Activated naive CD4-positive, alpha-beta T cell treated with anti-CD3 and anti-CD28 coated beads for 36 hours (primary cell): ENCODE measurements at regions of chr18 and their contacts with region 1.

Region 1: GRCh38 chr18:77061946-77062517 is 70.6 kb downstream of the MBP start:
- DNase-seq: peak; percentile 55
- H3K4me3 Mint-ChIP-seq: peak overlapping the region; percentile 11
- H3K27ac Mint-ChIP-seq: peak overlapping the region; percentile 98
- H3K4me1 Mint-ChIP-seq: peaks cover 78% of the 10 kb centered on the region
- H3K27me3 Mint-ChIP-seq: no peaks in the 10 kb centered on the region

Region 2: GRCh38 chr18:76859474-76860339 is 202.3 kb before region 1 on chr18:
- CTCF ChIA-PET with region 1: no interaction called
- intact Hi-C with region 1: loop called (anchors 1 kb)
- DNase-seq: peak; percentile 66
- H3K4me3 Mint-ChIP-seq: no peak overlapping the region
- H3K27ac Mint-ChIP-seq: peak overlapping the region; percentile 54
- H3K4me1 Mint-ChIP-seq: peaks cover 22% of the 10 kb centered on the region
- H3K27me3 Mint-ChIP-seq: no peaks in the 10 kb centered on the region

Region 3: DNA sequence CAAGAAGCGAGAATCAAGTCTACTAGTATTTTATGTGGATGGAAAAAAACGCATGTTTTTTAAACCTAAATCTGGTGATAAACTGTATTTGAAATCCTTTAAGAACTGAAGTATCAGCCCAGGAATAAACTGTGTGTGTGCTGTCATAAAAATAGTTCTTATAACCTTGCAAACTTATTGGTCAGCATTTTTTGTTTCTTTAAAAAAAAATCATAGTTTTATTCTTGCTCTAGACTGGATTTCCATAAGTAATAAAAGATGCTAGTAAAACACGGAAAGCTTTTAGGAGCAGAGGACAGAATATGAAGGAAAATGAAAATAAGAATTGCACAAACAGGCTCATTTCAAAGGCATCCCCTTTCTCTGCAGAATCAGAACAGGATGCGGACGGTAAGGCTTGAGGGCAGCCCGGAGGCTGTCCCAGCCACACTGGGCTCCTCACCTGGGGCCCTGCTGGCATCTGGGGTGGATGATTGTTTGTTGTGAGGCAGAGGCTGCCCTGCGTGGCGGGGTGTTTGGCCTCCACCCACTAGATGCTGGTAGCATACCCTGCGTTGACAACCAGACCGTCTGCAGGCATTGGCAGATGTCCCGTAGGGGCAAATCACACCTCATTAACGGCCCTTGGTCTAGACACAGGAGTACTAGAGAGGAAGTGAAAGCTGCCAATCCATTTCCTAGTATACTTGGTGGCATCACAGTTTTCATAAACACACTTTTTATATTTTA is 18.1 kb after region 1 on chr18:
- CTCF ChIA-PET with region 1: no interaction called
- intact Hi-C with region 1: no loop called
- DNase-seq: no peak
- H3K4me3 Mint-ChIP-seq: no peak overlapping the region
- H3K27ac Mint-ChIP-seq: no peak overlapping the region
- H3K4me1 Mint-ChIP-seq: peaks cover 57% of the 10 kb centered on the region
- H3K27me3 Mint-ChIP-seq: no peaks in the 10 kb centered on the region

Region 4: DNA sequence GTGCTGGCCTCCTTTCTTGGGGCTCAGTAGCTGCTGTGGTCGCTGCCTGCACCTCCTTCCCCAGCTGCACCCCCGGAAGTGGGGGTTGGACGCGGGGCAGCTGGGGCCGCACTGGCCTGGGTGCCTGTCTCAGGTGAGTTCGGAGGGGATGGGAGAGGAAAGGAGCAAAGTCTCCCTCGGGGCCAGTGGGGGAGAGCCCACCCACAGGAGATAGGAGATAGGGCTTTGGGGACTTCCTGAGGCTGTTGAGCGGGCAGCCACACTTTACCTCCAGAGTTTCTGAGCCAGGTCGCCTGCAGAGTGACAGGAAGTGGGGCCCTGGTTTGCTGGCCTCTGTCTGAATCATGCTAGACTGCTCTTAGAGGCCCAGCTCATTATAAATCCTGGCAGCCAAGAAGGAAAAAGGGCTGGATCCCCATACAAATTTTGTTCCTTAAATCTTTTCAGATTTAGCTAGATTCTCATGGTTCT is 62.5 kb after region 1 on chr18:
- CTCF ChIA-PET with region 1: interaction called, 3 read pairs
- intact Hi-C with region 1: loop called (anchors 1 kb)
- DNase-seq: peak; percentile 81
- H3K4me3 Mint-ChIP-seq: peak overlapping the region; percentile 70
- H3K27ac Mint-ChIP-seq: peak overlapping the region; percentile 93
- H3K4me1 Mint-ChIP-seq: peaks cover 88% of the 10 kb centered on the region
- H3K27me3 Mint-ChIP-seq: no peaks in the 10 kb centered on the region

Region 5: GRCh38 chr18:77132371-77133050 is 70.5 kb after region 1 on chr18 and contains the start of gene MBP:
- CTCF ChIA-PET with region 1: interaction called, 8 read pairs
- intact Hi-C with region 1: loop called (anchors 1 kb)
- DNase-seq: peak; percentile 78
- H3K4me3 Mint-ChIP-seq: peak within 1 kb of the TSS; percentile 90
- H3K27ac Mint-ChIP-seq: peak within 1 kb of the TSS; percentile 93
- H3K4me1 Mint-ChIP-seq: peaks cover 53% of the 10 kb centered on the region
- H3K27me3 Mint-ChIP-seq: no peaks in the 10 kb centered on the region
- total RNA-seq, gene MBP: 35.9 to 36.6 TPM